Colonic mucosa (tissue), 4 donors: ENCODE measurements at regions of chr16 and their contacts with region 1.

Region 1: DNA sequence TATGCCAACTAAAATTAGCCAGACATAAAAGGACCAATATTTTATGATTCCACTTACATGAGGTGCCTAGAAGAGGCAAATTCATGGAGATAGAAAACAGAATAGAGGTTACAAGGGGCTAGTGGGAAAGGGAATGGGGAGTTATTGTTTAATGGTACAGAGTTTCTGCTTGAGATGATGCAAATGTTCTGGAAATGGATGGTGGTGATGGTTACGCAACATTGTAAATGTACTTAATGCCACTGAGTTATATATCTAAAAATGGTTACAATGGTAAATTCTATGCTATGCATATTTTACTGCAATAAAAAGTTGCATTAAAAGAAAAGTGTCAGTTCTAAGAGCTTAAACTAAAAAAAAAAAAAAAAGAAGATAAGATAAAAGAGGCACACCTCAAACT is 17.9 kb downstream of the MT1X start:
- DNase-seq: no peak
- H3K4me3 ChIP-seq: no peak overlapping the region
- H3K27ac ChIP-seq: no peak overlapping the region
- H3K4me1 ChIP-seq: no peaks in the 10 kb centered on the region
- H3K27me3 ChIP-seq: no peaks in the 10 kb centered on the region
- CTCF ChIP-seq: no peak

Region 2: DNA sequence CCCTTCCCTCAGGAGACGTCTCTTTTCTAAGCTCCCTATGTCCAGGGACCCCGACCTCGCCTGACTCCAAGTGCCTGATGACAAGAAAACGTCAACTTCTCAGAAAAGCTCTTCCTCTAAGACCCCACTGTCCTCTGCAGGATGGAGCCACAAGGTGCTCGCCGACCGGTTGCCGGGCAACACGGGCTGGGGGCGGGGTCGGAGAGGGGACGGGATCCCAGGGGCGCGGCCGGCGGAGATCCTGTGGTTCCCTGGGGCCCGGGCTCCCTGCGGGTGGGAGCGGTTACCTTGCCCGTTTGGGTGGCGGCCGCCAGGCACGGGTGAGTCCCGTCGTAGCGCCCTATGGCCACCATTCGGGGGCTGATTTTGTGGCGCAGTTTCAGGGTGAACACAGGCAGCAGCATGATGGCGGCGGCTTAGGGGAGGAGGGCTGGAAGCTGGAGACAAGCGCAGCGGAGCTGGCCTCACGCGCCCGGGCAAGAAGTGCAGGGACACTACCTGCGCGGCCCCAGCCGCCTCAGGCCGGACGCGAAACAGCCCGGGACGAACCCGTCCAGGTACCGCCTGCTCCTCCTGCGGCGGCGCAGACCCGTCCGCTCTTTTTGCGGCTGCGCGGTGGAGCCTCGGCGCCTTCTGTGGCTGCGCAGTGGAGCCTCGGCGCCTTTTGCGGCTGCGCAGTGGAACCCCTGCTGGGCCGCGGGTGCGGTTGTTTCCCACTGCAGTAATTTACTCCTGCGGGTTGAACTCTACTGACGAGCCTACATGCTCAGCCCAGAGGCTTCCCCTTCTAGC is 180.5 kb before region 1 on chr16 and contains the start of gene BBS2:
- intact Hi-C with region 1: loop called (anchors 5 kb)
- DNase-seq: peak; percentile 92
- H3K4me3 ChIP-seq: peak within 1 kb of the TSS; percentile 99
- H3K27ac ChIP-seq: peak within 1 kb of the TSS; percentile 97
- H3K4me1 ChIP-seq: peaks cover 6% of the 10 kb centered on the region
- H3K27me3 ChIP-seq: no peaks in the 10 kb centered on the region
- CTCF ChIP-seq: no peak
- total RNA-seq, gene BBS2: 22.5 to 32.1 TPM

Region 3: DNA sequence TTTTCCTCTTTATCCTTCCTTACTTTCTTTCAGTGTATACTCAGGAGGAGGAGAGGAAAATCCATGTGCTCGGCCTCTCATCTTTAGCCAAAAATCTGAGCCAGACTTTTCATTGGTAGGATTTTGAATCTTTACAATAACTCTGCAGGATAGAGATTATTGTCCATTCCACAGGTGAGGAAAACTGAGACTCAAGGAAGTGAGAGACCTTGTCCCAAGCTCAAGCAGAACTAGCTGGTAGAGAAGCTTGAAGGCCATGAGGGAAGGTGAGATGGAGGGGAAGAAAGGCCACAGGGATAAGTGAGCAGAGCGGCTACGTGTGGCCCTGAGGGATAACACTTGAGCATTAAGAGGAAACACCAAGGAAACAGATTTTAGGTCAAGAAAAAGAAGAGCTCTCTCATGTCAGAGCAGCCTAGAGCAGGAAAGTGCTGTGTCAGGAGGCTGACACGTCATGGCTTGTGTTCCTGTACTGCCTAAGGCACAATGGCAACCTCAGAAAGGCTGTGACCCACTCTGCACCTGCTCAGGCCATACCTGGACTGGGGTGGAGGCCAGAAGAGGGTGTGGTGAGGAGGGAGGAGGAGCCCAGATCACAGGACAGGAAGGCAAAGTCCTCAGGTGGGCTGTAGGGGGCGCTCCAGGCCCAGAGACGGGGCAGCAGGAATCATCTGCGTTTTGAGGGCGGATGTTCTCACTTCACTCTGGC is 123.5 kb before region 1 on chr16:
- intact Hi-C with region 1: loop called (anchors 5 kb)
- DNase-seq: peak; percentile 91
- H3K4me3 ChIP-seq: no peak overlapping the region
- H3K27ac ChIP-seq: no peak overlapping the region
- H3K4me1 ChIP-seq: no peaks in the 10 kb centered on the region
- H3K27me3 ChIP-seq: no peaks in the 10 kb centered on the region
- CTCF ChIP-seq: peak; percentile 72

Region 4: DNA sequence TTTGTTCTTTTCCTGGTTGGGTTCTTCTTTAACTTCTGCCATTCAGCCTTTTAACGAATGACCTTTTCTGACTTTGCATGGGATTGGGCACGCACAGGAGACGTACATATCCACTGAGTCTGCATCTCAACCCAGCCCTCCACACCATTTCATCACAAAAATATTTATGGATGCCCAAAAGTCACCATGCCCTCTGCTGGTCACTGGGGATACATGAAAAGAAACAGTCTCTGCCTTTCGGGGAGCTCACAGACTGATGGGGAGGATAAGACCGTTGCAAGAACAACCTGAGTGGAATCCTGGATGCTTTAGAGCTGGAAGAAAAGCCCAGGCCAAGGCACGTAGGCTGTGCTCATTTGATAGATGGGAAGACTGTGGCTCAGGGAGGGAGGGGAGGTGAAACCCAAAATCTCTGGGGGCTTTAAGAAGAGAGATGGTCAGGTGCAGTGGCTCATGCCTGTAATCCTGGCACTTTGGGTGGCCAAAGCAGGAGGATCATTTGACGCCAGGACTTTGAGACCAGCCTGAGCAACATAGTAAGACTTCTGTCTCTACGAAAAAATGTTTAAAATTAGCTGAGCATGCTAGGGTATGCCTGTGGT is 99.7 kb before region 1 on chr16:
- intact Hi-C with region 1: loop called (anchors 5 kb)
- DNase-seq: no peak
- H3K4me3 ChIP-seq: no peak overlapping the region
- H3K27ac ChIP-seq: no peak overlapping the region
- H3K4me1 ChIP-seq: no peaks in the 10 kb centered on the region
- H3K27me3 ChIP-seq: no peaks in the 10 kb centered on the region
- CTCF ChIP-seq: peak; percentile 40